Caco-2 (cell line): ENCODE measurements at regions of chr3 and their contacts with region 1.

Region 1: DNA sequence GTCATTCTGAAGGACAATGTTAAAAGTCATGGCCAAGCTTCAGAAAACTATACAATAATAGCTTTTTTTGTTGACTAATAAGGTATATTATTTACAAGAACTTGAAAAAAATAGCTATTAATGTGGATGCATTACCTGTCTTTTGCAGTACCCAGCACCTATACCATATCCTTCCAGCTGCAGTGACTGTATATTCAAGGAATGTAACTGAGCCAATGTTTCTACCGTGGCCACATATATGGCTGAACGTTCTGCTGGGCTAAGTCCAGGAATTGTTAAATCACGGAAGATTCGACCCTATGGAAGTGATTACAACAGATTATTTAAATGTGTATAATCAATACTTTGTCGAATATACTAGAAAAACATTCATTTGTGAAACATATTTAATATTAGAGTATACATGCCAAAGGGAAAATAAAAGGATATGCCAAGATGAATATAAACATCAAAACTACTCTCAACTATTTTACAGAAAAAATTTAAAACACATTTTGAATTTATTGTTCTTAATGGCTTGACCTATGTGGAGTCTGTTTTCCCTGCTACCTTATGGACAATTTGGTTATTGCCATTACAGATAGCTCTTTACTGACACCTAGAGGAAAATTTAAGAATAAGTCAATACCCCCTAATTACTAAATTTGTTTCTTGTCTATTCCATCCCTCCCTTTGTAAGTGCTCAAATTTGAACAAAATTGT is 17.6 kb downstream of the ACAD11 start:
- DNase-seq: no peak
- H3K4me3 ChIP-seq: no peak overlapping the region
- H3K4me3 Mint-ChIP-seq: no peak overlapping the region
- H3K27ac Mint-ChIP-seq: no peak overlapping the region
- H3K4me1 ChIP-seq: no peaks in the 10 kb centered on the region; the same call in 1 of the 2 replicates
- H3K4me1 Mint-ChIP-seq: no peaks in the 10 kb centered on the region
- H3K27me3 ChIP-seq: no peaks in the 10 kb centered on the region
- H3K27me3 Mint-ChIP-seq: no peaks in the 10 kb centered on the region
- CTCF ChIP-seq: peak; percentile 57 to 71

Region 2: DNA sequence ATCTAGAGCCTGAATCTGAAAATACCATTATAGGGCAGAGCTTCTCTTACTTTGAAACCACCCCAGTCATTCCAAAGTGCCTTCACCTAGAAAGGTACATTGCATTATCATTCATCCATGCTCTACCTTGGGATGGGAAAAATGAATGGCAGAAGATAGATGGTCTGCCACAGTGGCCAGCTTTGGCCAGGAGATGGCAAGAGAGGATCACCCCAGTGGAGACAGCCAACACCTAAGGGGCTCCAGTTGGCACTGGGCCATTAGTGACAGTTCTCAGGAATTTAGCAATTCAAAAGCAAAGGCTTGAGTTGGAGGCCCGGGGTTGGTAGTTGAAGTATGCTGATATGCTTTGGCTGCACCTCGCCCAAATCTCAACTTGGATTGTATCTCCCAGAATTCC is 885.6 kb before region 1 on chr3:
- CTCF ChIA-PET with region 1: no interaction called
- POLR2A ChIA-PET with region 1: no interaction called
- intact Hi-C with region 1: no loop called
- DNase-seq: no peak
- H3K4me3 ChIP-seq: no peak overlapping the region
- H3K4me3 Mint-ChIP-seq: no peak overlapping the region
- H3K27ac Mint-ChIP-seq: no peak overlapping the region
- H3K4me1 ChIP-seq: no peaks in the 10 kb centered on the region
- H3K4me1 Mint-ChIP-seq: no peaks in the 10 kb centered on the region
- H3K27me3 ChIP-seq: no peaks in the 10 kb centered on the region
- H3K27me3 Mint-ChIP-seq: peaks cover 11% of the 10 kb centered on the region
- CTCF ChIP-seq: no peak

Region 3: DNA sequence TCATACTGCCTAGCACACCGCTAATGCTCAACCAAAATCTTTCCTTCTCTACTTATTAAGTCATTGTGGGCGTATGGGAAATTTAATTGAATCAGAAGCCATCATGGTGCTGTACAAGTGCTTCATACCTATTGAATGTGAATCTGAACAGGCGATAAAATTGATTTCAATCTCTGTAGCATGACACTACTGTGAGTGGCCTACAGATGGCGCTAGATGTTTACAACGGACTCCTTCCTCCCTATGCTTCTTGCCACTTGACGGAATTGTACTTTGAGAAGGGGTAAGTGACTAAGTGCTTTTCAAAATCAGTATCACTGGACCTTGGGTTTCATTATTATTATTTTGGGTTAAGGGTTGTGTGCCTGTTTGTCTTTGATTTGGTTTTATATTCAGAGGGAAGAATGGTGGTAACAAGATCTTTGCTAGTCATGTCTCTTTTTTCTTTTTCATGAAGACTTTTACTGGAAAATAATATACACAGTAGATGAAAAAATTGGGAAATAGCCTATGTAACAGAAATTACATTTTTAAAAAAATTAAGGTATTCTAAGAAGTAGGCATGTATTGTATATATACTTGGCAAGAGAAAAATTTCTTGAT is 289.3 kb before region 1 on chr3:
- CTCF ChIA-PET with region 1: no interaction called
- POLR2A ChIA-PET with region 1: no interaction called
- intact Hi-C with region 1: loop called (anchors 1 kb)
- DNase-seq: peak; percentile 61 to 70
- H3K4me3 ChIP-seq: no peak overlapping the region
- H3K4me3 Mint-ChIP-seq: no peak overlapping the region
- H3K27ac Mint-ChIP-seq: no peak overlapping the region
- H3K4me1 ChIP-seq: no peaks in the 10 kb centered on the region
- H3K4me1 Mint-ChIP-seq: peaks cover 14% of the 10 kb centered on the region
- H3K27me3 ChIP-seq: no peaks in the 10 kb centered on the region
- H3K27me3 Mint-ChIP-seq: no peaks in the 10 kb centered on the region
- CTCF ChIP-seq: peak; percentile 80 to 86

Region 4: GRCh38 chr3:132535575-132536441 is 106.2 kb before region 1 on chr3:
- CTCF ChIA-PET with region 1: interaction called, 14 read pairs
- POLR2A ChIA-PET with region 1: no interaction called
- intact Hi-C with region 1: loop called (anchors 1 kb)
- DNase-seq: peak; percentile 56 to 57
- H3K4me3 ChIP-seq: no peak overlapping the region
- H3K4me3 Mint-ChIP-seq: no peak overlapping the region
- H3K27ac Mint-ChIP-seq: no peak overlapping the region
- H3K4me1 ChIP-seq: no peaks in the 10 kb centered on the region
- H3K4me1 Mint-ChIP-seq: no peaks in the 10 kb centered on the region
- H3K27me3 ChIP-seq: no peaks in the 10 kb centered on the region
- H3K27me3 Mint-ChIP-seq: no peaks in the 10 kb centered on the region
- CTCF ChIP-seq: peak; percentile 59 to 63